Posterior vena cava (tissue), 2 donors: ENCODE measurements at regions of chr3 and their contacts with region 1.

Region 1: GRCh38 chr3:161274719-161275298 is 53.7 kb downstream of the NMD3 start:
- DNase-seq: no peak

Region 2: DNA sequence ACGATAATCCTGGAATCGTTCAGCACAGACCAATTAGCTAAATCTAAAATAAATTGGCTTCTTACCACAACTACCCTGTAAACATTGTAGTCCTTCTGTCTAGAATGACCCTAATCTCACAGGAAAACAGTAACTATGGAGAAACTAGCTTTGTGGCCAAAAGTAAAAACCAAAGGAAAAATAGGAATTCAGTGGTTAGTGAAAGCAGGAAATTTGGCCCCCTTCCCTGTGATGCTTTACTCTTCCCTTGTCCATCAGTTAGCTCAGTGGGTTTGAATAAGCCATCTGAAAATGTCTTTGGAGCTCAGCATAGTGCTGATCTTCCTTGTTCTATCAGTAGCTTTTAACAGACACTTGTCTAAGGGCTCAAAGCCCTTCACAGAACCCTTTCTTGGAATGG is 52.1 kb before region 1 on chr3:
- intact Hi-C with region 1: no loop called
- DNase-seq: no peak

Region 3: GRCh38 chr3:161423911-161424522 is 149.2 kb after region 1 on chr3:
- intact Hi-C with region 1: loop called (anchors 5 kb)
- DNase-seq: no peak

Region 4: GRCh38 chr3:162007722-162008121 is 732.9 kb after region 1 on chr3:
- intact Hi-C with region 1: no loop called
- DNase-seq: no peak